ENCODE measurements at regions of chr3 and their contacts with region 1.

Region 1: DNA sequence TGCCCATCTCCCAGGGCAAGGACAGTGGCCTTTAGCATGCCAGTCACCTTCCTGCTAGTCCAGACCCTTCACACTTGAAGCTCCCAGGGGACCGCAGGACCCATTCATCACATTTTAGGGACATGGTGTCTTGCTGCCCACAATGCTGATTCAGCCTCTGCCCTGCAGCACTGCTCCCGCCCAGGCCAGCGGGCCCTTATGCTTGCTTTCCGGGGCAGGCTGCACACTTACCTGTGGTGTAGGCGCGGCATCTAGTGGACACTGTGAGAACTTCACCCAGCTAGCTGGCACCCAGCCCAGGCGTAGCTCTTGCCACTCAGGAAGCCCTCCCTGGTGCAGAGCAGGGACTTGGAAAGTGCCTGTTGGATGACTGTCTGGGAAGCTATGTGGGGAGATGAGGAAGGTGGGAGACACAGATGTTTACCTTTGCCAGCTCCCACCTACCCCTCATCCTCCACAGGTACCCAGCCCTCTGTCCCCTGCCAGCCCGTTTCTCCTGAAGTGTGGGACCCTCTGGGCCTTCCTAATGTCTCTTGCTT is 26.2 kb upstream of the NR2C2 start:
- DNase-seq: peak; percentile 88 to 89 (median 89)
- ATAC-seq: peak; percentile 96 to 98 (median 98)
- H3K4me3 ChIP-seq: no peak overlapping the region
- H3K27ac ChIP-seq: no peak overlapping the region
- H3K4me1 ChIP-seq: peaks cover 0 to 3% (median 0%) of the 10 kb centered on the region in 4 donors
- H3K27me3 ChIP-seq: no peaks in the 10 kb centered on the region
- CTCF ChIP-seq: peak; percentile 97 to 100 (median 98)
- POLR2A ChIP-seq: no peak

Region 2: DNA sequence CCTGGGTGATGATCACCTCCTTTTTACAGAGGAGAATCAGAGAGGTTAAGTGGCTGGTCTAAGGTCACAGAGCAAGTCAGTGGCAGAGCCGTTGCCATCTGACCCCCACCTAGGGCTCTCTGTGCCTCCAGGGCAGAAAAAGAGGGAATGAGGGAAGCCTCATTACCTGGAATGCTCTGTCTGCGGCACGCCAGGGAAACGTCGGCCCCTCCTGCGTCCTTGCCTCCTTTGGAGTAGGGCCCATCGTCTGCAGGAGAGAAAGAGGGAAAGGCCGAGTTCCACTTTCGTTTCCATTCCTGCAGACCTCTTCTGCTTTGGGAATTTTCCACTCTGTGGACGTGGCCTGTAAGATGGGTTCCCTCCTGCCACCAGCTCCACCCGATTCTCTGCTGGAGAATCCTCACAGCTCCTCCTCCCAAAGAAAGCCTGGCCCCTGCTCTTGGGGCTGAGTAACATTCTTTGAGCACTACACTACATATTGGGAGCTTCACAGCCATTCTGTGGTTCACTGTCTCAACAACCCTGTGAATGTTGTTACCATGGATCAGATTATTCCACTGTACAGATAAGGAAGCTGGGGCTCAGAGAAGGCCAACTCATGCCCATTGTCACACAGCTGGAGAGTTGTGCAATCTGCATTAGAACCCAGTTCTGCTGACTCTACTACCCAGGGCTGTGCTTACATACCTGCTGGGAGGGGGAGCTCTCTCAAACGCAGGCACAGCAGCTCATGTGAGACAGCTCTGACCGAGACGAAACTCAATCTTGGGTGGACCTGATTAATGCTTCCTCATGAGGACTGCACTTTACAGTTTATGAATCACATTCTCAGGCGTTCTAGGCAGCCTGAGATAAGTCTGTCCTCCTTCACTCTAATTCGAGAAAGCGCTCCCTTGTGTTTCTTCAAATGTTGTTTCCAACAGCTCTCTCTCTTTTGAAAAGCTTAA is 395.2 kb before region 1 on chr3:
- intact Hi-C with region 1: no loop called
- DNase-seq: peak in 1 of 3 donors; percentile 22
- ATAC-seq: peak in 2 of 4 donors; percentile 19 to 25
- H3K4me3 ChIP-seq: no peak overlapping the region
- H3K27ac ChIP-seq: no peak overlapping the region
- H3K4me1 ChIP-seq: no peaks in the 10 kb centered on the region
- H3K27me3 ChIP-seq: no peaks in the 10 kb centered on the region
- CTCF ChIP-seq: no peak
- POLR2A ChIP-seq: no peak

Region 3: GRCh38 chr3:14791343-14791945 is 129.7 kb before region 1 on chr3:
- intact Hi-C with region 1: loop called (anchors 5 to 10 kb)
- DNase-seq: peak; percentile 73 to 85 (median 77)
- ATAC-seq: peak; percentile 90 to 96 (median 90)
- H3K4me3 ChIP-seq: no peak overlapping the region
- H3K27ac ChIP-seq: no peak overlapping the region
- H3K4me1 ChIP-seq: no peaks in the 10 kb centered on the region
- H3K27me3 ChIP-seq: no peaks in the 10 kb centered on the region
- CTCF ChIP-seq: peak; percentile 70 to 83 (median 78)
- POLR2A ChIP-seq: no peak

Region 4: GRCh38 chr3:15032650-15033049 is 111.5 kb after region 1 on chr3:
- intact Hi-C with region 1: loop called in 1 of 2 experiments (anchors 10 kb)
- DNase-seq: no peak
- ATAC-seq: no peak
- H3K4me3 ChIP-seq: no peak overlapping the region
- H3K27ac ChIP-seq: no peak overlapping the region
- H3K4me1 ChIP-seq: no peaks in the 10 kb centered on the region
- H3K27me3 ChIP-seq: no peaks in the 10 kb centered on the region
- CTCF ChIP-seq: no peak
- POLR2A ChIP-seq: no peak